Right lobe of liver (tissue), 6 donors: ENCODE measurements at regions of chr11 and their contacts with region 1.

Region 1: DNA sequence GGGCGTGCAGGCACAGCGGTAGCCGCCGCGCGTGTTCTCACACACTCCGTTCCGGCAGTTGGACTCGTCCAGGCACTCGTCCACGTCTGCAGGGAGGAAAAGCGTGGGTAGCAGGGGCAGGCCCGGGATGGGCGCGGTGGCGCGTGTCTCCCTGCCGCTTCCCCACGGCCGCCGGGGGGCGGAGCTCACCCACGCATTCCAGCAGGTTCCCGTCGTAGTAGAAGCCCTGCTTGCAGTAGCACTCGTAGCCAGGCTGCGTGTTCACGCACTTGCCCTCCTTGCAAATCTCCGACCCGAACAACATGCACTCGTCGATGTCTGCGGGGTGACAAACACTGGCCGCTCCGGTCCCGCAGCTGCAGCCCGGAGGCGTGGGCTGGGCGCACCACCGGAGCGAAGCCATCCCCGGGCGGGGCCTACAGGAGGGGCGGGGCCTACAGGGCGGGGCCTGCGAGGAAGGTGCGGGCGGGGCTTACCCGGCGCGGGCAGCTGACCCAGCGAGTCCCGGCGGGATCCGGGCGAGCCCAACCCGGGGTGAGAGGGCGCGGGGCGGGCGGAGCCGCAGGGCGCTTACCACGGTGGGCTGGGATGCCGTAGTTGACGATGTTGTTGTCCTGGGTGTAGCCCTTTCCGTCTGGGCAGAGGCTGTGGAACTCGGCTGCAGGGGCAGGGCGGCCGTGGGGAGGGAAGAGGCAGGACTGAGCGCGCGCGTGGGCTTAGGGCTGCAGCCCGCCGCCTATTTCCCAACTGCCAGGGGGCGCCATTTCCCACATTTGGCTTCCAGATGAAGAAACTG is 15.6 kb downstream of the SCYL1 start:
- DNase-seq: peak; percentile 87 to 95 (median 94)
- ATAC-seq: peak; percentile 85 to 93 (median 89)
- H3K4me3 ChIP-seq: peak overlapping the region; percentile 46 to 60 (median 59)
- H3K27ac ChIP-seq: peak overlapping the region; percentile 60 to 79 (median 66)
- H3K4me1 ChIP-seq: peaks cover 0 to 21% (median 9%) of the 10 kb centered on the region in 4 donors
- H3K27me3 ChIP-seq: no peaks in the 10 kb centered on the region
- CTCF ChIP-seq: peak; percentile 80 to 87 (median 83)
- POLR2A ChIP-seq: peak; percentile 17

Region 2: DNA sequence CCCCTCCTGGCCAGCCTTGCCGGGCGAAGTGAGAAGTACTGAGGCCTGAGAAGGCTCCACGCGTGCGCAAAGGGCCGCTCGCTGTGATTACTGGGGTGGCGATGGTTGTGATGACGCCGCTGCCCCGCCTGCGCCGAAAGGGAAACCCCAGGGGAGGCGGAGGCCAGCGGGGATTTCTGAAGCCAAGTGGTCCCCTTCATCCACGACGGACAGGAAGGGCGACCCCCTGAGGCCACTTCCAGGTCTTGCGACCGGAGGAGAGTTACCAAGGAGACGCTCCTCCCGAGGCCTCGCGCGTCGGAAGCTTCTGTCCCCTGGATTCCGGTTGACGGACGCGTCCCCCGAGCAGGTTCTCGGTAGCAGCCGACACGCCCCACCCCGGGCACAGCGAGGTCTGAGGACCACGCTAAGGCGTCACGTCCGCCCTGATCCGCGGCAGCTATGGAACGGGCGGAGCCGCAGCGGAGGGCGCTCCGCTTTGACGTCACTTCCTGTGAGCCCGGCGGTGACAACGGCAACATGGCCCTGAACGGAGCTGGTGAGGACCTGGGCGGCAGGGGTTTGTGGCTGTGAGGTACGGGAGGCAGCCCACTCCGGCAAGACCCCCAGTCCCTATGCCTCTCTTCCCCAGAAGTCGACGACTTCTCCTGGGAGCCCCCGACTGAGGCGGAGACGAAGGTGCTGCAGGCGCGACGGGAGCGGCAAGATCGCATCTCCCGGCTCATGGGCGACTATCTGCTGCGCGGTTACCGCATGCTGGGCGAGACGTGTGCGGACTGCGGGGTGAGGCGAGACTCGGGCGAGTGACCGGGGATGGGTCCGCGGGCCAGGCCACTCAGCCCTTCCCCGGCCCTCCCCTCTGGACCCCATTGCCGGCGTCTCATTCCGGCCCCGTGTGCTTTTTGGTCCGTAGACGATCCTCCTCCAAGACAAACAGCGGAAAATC is 29.8 kb after region 1 on chr11 and contains the start of gene ZNRD2:
- intact Hi-C with region 1: loop called (anchors 5 kb)
- DNase-seq: peak; percentile 98 to 100 (median 98)
- ATAC-seq: peak; percentile 74 to 83 (median 79)
- H3K4me3 ChIP-seq: peak within 1 kb of the TSS; percentile 86 to 99 (median 93)
- H3K27ac ChIP-seq: peak within 1 kb of the TSS; percentile 74 to 91 (median 83)
- H3K4me1 ChIP-seq: peaks cover 0 to 51% (median 20%) of the 10 kb centered on the region in 4 donors
- H3K27me3 ChIP-seq: no peaks in the 10 kb centered on the region
- CTCF ChIP-seq: peak; percentile 41 to 55 (median 43)
- POLR2A ChIP-seq: peak; percentile 68
- total RNA-seq, gene ZNRD2: 11.6 to 43.2 (median 16.5) TPM

Region 3: DNA sequence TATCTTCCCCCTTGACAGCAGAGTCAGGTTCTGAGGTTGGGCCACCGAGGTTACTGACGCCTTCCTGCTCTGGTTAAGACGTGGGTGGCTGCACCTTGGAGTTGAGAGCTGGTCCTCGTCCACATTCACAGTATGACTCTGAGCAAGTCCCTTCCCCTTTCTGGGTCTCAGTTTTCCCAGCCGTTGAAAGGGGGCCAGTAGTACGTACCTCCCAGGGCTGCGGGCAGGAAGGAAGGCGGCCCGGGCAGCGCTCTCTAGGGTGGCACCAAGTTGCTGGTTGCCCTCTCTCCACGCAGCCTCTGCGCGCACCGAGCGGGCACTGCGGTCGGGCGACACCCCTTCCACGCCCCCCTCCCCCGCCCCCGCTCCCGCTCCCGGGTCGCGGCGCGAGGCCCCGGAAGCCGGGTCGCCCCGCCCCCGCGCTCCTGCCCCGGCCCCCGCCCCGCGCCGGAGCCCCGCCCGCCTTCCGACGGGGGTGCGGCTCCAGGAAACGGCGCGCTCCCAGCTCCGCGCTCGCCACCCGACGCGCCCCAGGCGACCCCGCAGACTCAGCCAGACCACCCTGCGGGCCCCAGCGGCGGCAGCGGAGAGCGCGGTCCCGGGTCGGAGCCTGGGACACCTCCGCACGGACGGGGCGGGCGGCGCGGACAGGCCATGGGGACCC is 35.2 kb after region 1 on chr11 and contains the start of gene EHBP1L1:
- intact Hi-C with region 1: loop called (anchors 5 kb)
- DNase-seq: peak in 2 of 3 donors; percentile 82 to 87
- ATAC-seq: peak; percentile 19 to 52 (median 36)
- H3K4me3 ChIP-seq: peak within 1 kb of the TSS; percentile 55 to 70 (median 70)
- H3K27ac ChIP-seq: peak within 1 kb of the TSS; percentile 58 to 88 (median 68)
- H3K4me1 ChIP-seq: peaks cover 0 to 48% (median 15%) of the 10 kb centered on the region in 4 donors
- H3K27me3 ChIP-seq: no peaks in the 10 kb centered on the region
- CTCF ChIP-seq: no peak
- POLR2A ChIP-seq: peak; percentile 30
- total RNA-seq, gene EHBP1L1: 10.0 to 29.9 (median 13.7) TPM